Activated CD4-positive, alpha-beta T cell treated with anti-CD3 and anti-CD28 coated beads, Interleukin-2, amount 10 ng/mL, durations not matched to agents 24 days and 14 days (primary cell): ENCODE measurements at regions of chrX and their contacts with region 1.

Region 1: GRCh38 chrX:7132335-7133049 is 15.0 kb upstream of the STS start:
- DNase-seq: peak; percentile 65
- H3K4me3 Mint-ChIP-seq: no peak overlapping the region
- H3K27ac Mint-ChIP-seq: no peak overlapping the region
- H3K4me1 Mint-ChIP-seq: peaks cover 11% of the 10 kb centered on the region
- H3K27me3 Mint-ChIP-seq: no peaks in the 10 kb centered on the region

Region 2: GRCh38 chrX:7170903-7171302 is 38.4 kb after region 1 on chrX:
- intact Hi-C with region 1: loop called (anchors 2 kb)
- DNase-seq: peak; percentile 74
- H3K4me3 Mint-ChIP-seq: no peak overlapping the region
- H3K27ac Mint-ChIP-seq: no peak overlapping the region
- H3K4me1 Mint-ChIP-seq: no peaks in the 10 kb centered on the region
- H3K27me3 Mint-ChIP-seq: no peaks in the 10 kb centered on the region